ENCODE measurements at regions of chr2 and their contacts with region 1.

Region 1: GRCh38 chr2:54581326-54582039 is 125.4 kb downstream of the SPTBN1 start:
- DNase-seq: no peak
- H3K4me3 ChIP-seq: no peak overlapping the region
- H3K27ac ChIP-seq: no peak overlapping the region
- H3K4me1 ChIP-seq: peaks cover 33% of the 10 kb centered on the region
- H3K27me3 ChIP-seq: no peaks in the 10 kb centered on the region
- CTCF ChIP-seq: no peak

Region 2: GRCh38 chr2:54115284-54116137 is 466.0 kb before region 1 on chr2 and contains the start of gene ACYP2:
- CTCF ChIA-PET with region 1: interaction called, 11 read pairs
- POLR2A ChIA-PET with region 1: no interaction called
- intact Hi-C with region 1: no loop called
- DNase-seq: peak; percentile 91 to 97
- H3K4me3 ChIP-seq: peak within 1 kb of the TSS; percentile 79
- H3K27ac ChIP-seq: peak within 1 kb of the TSS; percentile 96
- H3K4me1 ChIP-seq: peaks cover 6% of the 10 kb centered on the region
- H3K27me3 ChIP-seq: no peaks in the 10 kb centered on the region
- CTCF ChIP-seq: peak; percentile 55
- total RNA-seq, gene ACYP2: 23.9 and 25.9 TPM in 2 replicates

Region 3: GRCh38 chr2:54226221-54226620 is 355.3 kb before region 1 on chr2:
- CTCF ChIA-PET with region 1: no interaction called
- POLR2A ChIA-PET with region 1: interaction called, 26 read pairs
- intact Hi-C with region 1: no loop called
- DNase-seq: no peak
- H3K4me3 ChIP-seq: no peak overlapping the region
- H3K27ac ChIP-seq: no peak overlapping the region
- H3K4me1 ChIP-seq: no peaks in the 10 kb centered on the region
- H3K27me3 ChIP-seq: no peaks in the 10 kb centered on the region
- CTCF ChIP-seq: no peak

Region 4: DNA sequence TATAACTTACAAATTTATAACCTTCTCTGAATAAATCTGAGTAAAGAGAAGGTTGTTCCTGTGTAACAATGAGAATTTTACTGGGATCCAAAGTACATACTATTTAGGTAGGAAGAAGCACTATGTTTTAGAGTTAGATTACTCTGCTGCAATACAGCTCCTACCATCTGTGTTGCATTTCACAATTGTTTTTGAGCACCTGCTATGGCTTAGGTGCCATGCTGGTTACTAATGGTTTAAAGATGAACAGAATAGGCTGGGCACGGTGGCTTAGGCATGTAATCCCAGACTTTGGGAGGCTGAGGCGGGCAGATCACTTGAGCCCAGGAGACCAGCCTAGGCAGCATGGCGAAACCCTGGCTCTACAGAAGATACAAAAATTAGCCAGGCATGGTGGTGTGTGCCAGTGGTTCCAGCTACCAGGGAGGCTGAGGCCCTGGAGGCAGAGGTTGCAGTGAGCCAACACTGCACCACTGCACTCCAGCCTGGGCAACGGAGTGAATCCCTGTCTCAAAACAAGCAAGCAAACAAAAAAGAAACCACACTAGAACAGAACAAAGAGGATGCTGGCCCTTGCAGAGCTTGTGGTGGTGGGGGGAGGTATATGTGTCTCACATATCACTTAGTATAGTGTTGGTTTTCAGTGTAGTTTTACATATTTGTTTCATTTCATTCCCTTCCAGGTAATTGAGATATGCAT is 68.7 kb before region 1 on chr2:
- CTCF ChIA-PET with region 1: no interaction called
- POLR2A ChIA-PET with region 1: no interaction called
- intact Hi-C with region 1: no loop called
- DNase-seq: no peak
- H3K4me3 ChIP-seq: no peak overlapping the region
- H3K27ac ChIP-seq: no peak overlapping the region
- H3K4me1 ChIP-seq: no peaks in the 10 kb centered on the region
- H3K27me3 ChIP-seq: no peaks in the 10 kb centered on the region
- CTCF ChIP-seq: no peak